WTC11 (cell line): ENCODE measurements at regions of chr9 and their contacts with region 1.

Region 1: DNA sequence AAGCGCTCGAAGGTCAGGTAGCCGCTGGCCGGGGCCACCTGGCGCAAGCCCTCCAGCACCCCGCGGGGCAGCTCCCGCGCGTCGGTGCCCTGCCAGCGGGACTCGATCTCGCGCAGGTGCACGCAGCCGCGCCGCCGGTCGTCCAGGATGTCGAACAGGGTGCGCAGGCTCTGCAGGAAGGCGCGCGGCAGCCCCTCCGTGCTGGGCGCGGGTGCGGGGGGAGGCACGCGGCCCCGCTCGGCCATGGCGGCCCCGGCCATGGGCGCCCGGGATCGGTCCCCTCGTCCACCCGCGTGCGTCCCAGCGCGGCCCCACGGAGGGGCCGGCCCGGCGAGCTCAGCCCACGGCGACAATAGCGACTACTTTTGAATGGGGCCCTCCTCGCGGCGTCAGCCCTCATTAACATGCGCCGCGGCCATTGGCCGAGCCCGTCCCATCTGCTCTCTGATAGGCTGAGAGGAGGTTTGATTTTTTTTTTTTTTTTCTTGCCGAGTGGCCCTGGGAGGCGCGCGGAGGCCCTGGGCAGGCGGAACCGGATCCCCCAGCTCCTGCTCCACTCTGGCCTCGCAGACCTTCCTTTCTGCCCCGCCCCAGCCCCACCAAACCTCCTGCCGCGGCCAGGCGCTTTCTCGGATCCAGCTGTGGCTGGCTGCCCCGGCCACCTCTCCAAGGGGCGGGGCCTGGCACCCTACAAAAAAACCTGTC is at the start of gene SAPCD2:
- DNase-seq: peak; percentile 88
- ATAC-seq: peak; percentile 84
- H3K4me3 Mint-ChIP-seq: peak within 1 kb of the TSS; percentile 71
- H3K27ac Mint-ChIP-seq: peak within 1 kb of the TSS; percentile 95
- H3K4me1 Mint-ChIP-seq: peaks cover 34% of the 10 kb centered on the region
- H3K27me3 Mint-ChIP-seq: no peaks in the 10 kb centered on the region
- CTCF ChIP-seq: no peak
- total RNA-seq, gene SAPCD2: 52.0 to 67.0 TPM (median 53.6 TPM) in 3 replicates

Region 2: GRCh38 chr9:136790927-136791641 is 279.3 kb before region 1 on chr9 and contains the start of gene TMEM141:
- CTCF ChIA-PET with region 1: interaction called, 10 read pairs
- POLR2A ChIA-PET with region 1: no interaction called
- DNase-seq: peak; percentile 100
- ATAC-seq: peak; percentile 92
- H3K4me3 Mint-ChIP-seq: peak within 1 kb of the TSS; percentile 78
- H3K27ac Mint-ChIP-seq: peak within 1 kb of the TSS; percentile 88
- H3K4me1 Mint-ChIP-seq: peaks cover 20% of the 10 kb centered on the region
- H3K27me3 Mint-ChIP-seq: peaks cover 5% of the 10 kb centered on the region
- CTCF ChIP-seq: no peak
- total RNA-seq, gene TMEM141: 72.0 to 86.7 TPM (median 86.1 TPM) in 3 replicates

Region 3: DNA sequence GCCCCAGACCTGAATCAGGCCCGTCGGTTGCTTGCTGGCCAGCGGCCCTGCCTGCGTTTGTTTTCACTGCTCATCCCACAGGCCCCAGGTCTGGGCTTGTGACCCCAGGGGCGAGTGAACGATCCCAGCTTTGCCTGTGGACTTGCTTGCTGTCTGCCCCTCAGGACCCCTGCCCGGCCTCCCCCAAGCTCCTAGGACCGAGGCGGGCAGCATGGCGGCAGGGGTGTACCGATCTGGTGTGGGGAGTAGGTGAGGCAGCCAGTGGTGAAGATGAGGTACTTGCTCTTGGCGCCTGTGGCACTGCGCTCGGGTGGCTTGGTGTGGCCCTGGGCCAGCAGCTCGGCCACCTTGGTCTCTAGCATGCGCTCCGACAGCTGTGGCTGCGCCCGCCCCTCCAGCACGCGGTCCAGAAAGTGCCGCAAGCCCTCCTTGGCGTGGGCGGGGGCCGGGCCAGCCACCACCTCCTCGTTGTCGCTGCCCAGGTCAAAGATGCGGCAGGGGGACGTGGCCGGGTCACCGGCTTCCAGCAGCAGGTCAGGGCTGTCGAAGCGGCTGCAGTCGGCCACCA is 128.5 kb before region 1 on chr9:
- CTCF ChIA-PET with region 1: no interaction called
- POLR2A ChIA-PET with region 1: no interaction called
- DNase-seq: no peak
- ATAC-seq: no peak
- H3K4me3 Mint-ChIP-seq: no peak overlapping the region
- H3K27ac Mint-ChIP-seq: no peak overlapping the region
- H3K4me1 Mint-ChIP-seq: peaks cover 6% of the 10 kb centered on the region
- H3K27me3 Mint-ChIP-seq: no peaks in the 10 kb centered on the region
- CTCF ChIP-seq: no peak

Region 4: DNA sequence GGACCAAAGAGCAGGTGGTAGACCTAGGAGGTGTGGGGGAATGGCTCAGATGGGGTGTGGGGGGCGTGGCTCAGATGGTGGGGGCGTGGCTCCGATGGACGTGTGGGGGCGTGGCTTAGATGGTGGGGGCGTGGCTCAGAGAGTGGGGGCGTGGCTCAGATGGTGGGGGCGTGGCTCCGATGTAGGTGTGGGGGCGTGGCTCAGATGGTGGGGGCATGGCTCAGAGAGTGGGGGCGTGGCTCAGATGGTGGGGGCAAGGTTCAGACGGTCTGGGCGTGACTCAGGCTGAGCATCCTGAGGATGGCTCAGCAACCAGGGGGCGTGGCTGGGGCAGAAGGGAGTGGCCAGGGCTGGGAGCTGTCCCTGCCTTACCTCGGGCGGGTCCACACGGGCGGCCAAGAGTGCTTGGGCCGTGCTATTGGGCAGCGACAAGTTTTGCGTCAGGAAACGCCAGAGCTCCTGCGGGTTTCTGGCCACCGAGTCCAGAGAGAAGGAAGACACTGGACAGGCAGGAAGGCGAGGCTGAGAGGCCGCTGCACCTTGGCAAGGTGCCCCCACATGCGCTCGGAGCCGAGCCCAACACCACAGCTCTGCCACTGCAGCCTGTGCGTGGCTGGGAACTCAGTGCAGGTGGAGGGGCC is 48.3 kb before region 1 on chr9:
- CTCF ChIA-PET with region 1: interaction called, 11 read pairs
- POLR2A ChIA-PET with region 1: no interaction called
- DNase-seq: peak; percentile 98
- ATAC-seq: peak; percentile 96
- H3K4me3 Mint-ChIP-seq: no peak overlapping the region
- H3K27ac Mint-ChIP-seq: no peak overlapping the region; the same call in 1 of the 2 replicates
- H3K4me1 Mint-ChIP-seq: no peaks in the 10 kb centered on the region; the same call in 1 of the 2 replicates
- H3K27me3 Mint-ChIP-seq: peaks cover 2% of the 10 kb centered on the region; the same call in 1 of the 2 replicates
- CTCF ChIP-seq: no peak

Region 5: DNA sequence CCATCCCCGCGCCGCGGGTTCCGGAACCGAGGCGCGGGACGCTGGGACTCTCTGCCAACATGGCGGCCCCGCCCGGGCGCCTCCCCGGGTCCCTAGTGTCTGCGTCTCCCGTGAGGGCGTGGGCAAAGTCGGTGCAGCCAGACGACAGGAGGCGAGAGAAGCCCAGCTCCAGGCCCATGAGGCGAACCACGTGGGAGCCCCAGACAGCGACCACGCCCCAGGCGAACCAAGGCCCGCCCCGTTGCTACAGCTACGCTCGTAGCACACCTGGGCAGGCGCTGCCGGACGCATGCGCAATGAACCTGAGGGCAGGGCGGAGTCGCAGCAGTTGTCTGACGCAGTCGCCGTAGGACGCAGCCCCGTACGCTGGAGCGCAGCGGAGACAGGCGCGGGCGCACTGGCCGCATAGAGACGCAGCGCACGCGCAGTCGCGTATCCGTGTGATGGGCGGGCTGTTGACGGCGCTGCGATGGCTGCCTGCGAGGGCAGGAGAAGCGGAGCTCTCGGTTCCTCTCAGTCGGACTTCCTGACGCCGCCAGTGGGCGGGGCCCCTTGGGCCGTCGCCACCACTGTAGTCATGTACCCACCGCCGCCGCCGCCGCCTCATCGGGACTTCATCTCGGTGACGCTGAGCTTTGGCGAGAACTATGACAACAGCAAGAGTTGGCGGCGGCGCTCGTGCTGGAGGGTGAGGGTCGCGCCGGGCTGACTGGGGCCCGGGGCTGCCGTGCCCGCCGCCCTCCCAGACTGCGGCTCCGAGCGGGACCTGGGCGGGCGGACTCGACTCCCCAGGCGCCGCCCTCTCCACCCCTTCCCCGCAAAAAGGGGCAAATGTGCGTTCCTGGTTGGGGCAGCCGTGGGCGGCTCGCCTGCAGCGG is 16.4 kb after region 1 on chr9 and contains the start of gene MAN1B1:
- CTCF ChIA-PET with region 1: interaction called, 177 read pairs
- POLR2A ChIA-PET with region 1: interaction called, 21 read pairs
- DNase-seq: peak; percentile 99
- ATAC-seq: peak; percentile 95
- H3K4me3 Mint-ChIP-seq: peak within 1 kb of the TSS; percentile 85
- H3K27ac Mint-ChIP-seq: peak within 1 kb of the TSS; percentile 91
- H3K4me1 Mint-ChIP-seq: peaks cover 16% of the 10 kb centered on the region
- H3K27me3 Mint-ChIP-seq: peaks cover 9% of the 10 kb centered on the region
- CTCF ChIP-seq: no peak
- total RNA-seq, gene MAN1B1: 44.9 to 57.1 TPM (median 47.1 TPM) in 3 replicates

Region 6: DNA sequence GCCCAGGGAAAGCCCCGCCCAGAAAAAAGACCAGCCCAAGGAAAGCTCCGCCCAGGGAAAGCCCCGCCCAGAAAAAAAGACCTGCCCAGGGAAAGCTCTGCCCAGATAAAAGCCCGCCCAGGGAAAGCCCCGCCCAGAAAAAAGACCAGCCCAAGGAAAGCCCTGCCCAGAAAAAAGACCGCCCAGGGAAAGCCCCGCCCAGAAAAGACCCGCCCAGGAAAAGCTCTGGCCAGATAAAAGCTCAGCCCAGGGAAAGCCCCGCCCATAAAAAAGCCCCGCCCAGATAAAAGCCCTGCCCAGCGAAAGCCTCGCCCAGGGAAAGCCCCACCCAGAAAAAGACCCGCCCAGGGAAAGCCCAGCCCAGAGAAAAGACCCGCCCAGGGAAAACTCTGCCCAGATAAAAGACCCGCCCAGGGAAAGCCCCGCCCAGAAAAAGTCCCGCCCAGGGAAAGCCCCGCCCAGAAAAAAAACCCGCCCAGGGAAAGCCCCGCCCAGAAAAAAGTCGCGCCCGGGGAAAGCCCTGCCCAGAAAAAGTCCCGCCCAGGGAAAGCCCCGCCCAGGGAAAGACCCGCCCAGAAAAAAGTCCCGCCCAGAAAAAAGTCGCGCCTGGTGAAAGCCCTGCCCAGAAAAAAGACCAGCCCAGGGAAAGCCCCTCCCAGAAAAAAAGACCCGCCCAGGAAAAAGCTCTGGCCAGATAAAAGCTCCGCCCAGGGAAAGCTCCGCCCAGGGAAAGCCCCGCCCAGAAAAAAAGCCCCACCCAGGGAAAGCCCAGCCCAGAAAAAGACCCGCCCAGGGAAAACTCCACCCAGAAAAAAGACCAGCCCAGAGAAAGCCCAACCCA is 80.5 kb after region 1 on chr9:
- CTCF ChIA-PET with region 1: interaction called, 19 read pairs
- POLR2A ChIA-PET with region 1: no interaction called
- DNase-seq: peak; percentile 80
- ATAC-seq: peak; percentile 54
- H3K4me3 Mint-ChIP-seq: no peak overlapping the region
- H3K27ac Mint-ChIP-seq: no peak overlapping the region
- H3K4me1 Mint-ChIP-seq: no peaks in the 10 kb centered on the region; the same call in 1 of the 2 replicates
- H3K27me3 Mint-ChIP-seq: peaks cover 17% of the 10 kb centered on the region
- CTCF ChIP-seq: no peak

Region 7: GRCh38 chr9:137176302-137177182 is 106.2 kb after region 1 on chr9:
- CTCF ChIA-PET with region 1: interaction called, 18 read pairs
- POLR2A ChIA-PET with region 1: no interaction called
- DNase-seq: peak; percentile 48
- ATAC-seq: peak; percentile 60
- H3K4me3 Mint-ChIP-seq: no peak overlapping the region
- H3K27ac Mint-ChIP-seq: peak overlapping the region; percentile 49
- H3K4me1 Mint-ChIP-seq: no peaks in the 10 kb centered on the region
- H3K27me3 Mint-ChIP-seq: peaks cover 5% of the 10 kb centered on the region
- CTCF ChIP-seq: peak; percentile 21; the same call in 1 of the 2 replicates